HepG2 (cell line): ENCODE measurements at regions of chr9 and their contacts with region 1.

Region 1: DNA sequence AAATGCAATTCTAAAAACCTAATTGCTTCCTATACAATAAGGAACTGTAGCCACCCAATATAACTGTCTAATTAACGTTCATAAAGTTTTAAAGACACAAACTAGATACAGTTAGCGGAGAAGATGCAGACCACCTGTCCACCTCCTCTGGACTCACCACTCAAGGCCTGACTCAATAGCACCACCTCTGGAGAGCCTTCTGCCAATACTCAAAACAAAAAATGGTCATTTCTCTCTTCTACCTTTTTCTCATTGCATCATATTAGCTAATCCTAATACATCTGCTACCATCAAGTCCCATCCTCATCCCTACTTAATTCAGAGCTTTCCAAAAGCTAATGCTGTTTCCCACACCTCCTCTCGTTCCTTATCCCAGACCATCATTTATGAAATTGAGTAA is 159.9 kb downstream of the MLLT3 start:
- DNase-seq: no peak
- ATAC-seq: no peak
- H3K4me3 ChIP-seq: no peak overlapping the region
- H3K27ac ChIP-seq: no peak overlapping the region
- H3K4me1 ChIP-seq: no peaks in the 10 kb centered on the region
- H3K27me3 ChIP-seq: no peaks in the 10 kb centered on the region
- CTCF ChIP-seq: peak; percentile 15; the same call in 1 of the 2 replicates
- EP300 ChIP-seq: no peak
- POLR2A ChIP-seq: no peak
- RAD21 ChIP-seq: no peak

Region 2: GRCh38 chr9:20538956-20539355 is 76.5 kb after region 1 on chr9:
- CTCF ChIA-PET with region 1: no interaction called
- POLR2A ChIA-PET with region 1: no interaction called
- in situ Hi-C with region 1: loop called (anchors 10 kb)
- intact Hi-C with region 1: no loop called
- DNase-seq: no peak
- ATAC-seq: no peak
- H3K4me3 ChIP-seq: no peak overlapping the region
- H3K27ac ChIP-seq: no peak overlapping the region
- H3K4me1 ChIP-seq: no peaks in the 10 kb centered on the region
- H3K27me3 ChIP-seq: no peaks in the 10 kb centered on the region
- CTCF ChIP-seq: no peak
- EP300 ChIP-seq: no peak
- POLR2A ChIP-seq: no peak
- RAD21 ChIP-seq: no peak